Head of caudate nucleus (tissue), 42 donors: ENCODE measurements at regions of chr17 and their contacts with region 1.

Region 1: DNA sequence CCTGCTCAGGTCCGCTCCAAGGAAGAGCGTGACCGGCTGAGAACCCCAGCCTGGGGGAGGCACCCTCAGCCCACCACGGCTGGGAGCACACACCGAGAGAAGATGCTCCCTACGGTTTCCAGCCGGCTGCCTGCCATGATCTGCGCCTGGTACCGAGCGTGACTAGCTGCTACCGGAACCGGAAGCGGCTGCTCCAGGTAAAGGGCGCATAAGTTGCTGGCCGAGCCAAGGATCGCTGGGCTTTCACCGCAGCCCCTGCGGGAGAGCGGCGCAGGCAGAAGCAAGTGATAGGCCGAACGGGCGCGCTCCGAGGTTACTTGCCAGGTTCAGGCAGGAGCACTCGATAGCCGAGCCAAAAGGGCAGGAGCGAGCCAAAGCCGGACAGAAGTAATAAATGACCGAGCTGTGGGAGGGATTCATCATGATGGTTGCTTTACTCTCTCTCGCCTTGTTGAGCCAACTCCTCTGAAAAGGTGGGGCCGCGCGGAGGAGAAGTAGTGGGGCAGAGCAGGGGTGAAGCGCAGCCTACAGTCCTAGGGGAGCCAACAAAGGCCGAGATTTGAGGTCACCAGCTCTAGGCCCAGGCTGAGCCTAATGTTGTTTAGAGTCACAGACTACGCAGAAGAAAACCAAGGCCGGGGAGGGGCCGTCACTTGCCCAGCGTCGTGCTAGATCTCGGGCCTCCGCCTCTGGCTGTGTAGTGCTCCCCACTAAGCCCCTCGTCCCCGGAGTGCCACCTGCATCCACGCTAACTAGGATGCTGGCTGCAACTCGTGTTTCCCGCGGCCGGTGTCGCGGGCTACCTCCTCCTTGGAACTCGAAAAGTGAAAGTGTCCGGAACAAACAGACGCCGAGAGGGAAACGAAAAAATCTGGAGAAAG is at the start of gene MRPS23:
- DNase-seq: peak; percentile 96 to 100 (median 98)

Region 2: DNA sequence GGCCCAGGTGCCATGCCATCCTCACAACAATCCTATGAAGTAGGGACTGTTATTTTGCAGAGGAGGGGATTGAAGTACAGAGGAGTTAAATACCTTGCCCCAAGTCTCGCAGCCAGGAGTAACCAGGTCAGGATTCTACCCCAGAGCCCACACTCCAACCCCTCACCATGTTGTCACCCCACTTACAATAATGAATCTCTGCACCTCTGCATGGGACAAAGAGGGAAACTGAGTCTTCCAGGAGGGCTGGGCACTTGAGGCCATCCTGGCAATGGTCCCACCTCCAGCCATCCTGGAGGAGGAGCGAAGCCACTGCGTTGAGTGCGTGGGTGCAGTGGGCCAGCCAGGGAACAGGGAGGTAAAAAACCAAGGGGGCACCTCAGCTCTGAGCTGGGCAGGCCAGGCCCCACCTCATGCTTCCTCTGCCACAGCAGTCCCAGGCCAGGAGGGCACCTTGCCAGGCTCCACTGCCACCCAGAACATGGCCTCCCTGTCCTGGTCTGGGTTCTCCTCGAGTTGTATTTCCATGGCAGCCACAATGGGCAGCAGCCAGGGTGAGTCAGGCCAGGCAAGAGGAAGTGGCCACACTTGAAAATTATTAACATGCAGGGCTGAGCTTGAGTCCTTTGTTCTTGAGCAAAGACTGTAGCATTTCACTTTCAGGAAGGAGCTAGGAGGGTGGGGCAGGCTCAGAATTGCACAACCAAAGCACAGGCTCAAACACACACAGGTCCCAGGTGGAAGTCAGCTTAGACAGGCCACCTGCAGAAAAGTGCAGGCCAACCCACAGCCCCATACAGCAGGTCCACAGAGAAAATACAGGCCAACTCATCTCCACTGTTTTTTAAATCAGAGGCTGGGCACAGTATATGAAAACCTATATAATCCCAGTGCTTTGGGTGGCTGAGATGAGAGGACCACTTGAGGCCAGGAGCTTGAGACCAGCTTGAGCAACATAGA is 53.0 kb after region 1 on chr17:
- intact Hi-C with region 1: loop called (anchors 5 kb)
- DNase-seq: peak; percentile 58 to 92 (median 78)

Region 3: GRCh38 chr17:58006924-58007780 is 157.0 kb after region 1 on chr17 and contains the start of gene SRSF1:
- intact Hi-C with region 1: loop called (anchors 5 kb)
- DNase-seq: peak; percentile 92 to 99 (median 96)